K562 (cell line): ENCODE measurements at regions of chr17 and their contacts with region 1.

Region 1: DNA sequence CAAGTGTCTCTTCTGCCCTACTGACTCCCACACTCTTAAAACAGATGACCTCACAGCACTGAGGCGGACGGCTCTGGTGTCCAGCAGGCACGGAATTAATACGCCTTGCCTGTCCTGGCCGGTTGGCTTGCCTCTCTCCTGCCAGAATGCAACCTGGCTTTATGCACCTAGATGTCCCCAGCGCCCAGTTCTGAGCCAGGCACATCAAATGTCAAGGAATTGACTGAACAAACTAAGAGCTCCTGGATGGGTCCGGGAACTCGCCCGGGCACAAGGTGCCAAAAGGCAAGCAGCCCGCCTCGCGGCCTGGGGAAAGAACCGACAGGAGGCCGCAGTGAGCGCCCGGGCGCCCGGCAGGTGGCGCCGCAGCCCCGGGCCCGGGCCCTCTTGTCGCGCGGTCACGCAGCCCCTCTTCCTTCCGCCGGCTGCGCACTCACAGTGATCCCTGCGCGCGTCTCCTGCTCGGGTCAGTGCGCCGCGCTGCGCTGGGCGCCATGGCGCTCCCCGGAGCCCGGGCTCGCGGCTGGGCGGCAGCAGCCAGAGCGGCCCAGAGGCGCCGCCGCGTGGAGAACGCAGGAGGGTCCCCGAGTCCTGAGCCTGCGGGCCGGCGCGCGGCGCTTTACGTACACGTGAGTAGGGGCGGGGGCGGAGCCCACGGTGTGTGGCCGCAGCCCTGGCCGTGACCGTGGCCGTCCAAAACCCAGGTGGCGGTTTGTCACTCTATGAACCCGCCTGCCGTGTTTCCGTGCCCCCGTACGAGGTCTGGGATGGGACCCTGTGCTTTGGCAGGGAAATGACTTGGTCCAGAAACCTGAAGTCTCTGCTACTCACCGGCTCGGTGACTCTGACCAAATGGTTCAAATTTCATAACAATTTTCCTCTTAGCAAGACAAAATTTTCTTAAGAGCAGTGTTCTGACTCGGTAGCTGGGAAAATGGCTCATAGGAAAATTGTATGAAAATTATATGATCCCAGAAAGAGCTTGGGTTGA is at the start of gene RSAD1:
- DNase-seq: peak; percentile 89 to 93 (median 90)
- ATAC-seq: peak; percentile 93
- H3K4me3 ChIP-seq: peak within 1 kb of the TSS; percentile 80
- H3K27ac ChIP-seq: peak within 1 kb of the TSS; percentile 90
- H3K4me1 ChIP-seq: peaks cover 11 to 34% of the 10 kb centered on the region in 2 experiments; a peak in 4 of 5 replicates
- H3K27me3 ChIP-seq: peaks cover 4 to 9% of the 10 kb centered on the region in 2 experiments; a peak in 2 of 5 replicates
- CTCF ChIP-seq: peak; percentile 76 to 96 (median 82)
- EP300 ChIP-seq: peak; percentile 13; the same call in 1 of the 2 replicates
- POLR2A ChIP-seq: peak; percentile 70; the same call in 1 of the 2 replicates
- RAD21 ChIP-seq: peak; percentile 83 to 86
- polyA plus RNA-seq, gene RSAD1: 4.5 to 5.2 TPM

Region 2: DNA sequence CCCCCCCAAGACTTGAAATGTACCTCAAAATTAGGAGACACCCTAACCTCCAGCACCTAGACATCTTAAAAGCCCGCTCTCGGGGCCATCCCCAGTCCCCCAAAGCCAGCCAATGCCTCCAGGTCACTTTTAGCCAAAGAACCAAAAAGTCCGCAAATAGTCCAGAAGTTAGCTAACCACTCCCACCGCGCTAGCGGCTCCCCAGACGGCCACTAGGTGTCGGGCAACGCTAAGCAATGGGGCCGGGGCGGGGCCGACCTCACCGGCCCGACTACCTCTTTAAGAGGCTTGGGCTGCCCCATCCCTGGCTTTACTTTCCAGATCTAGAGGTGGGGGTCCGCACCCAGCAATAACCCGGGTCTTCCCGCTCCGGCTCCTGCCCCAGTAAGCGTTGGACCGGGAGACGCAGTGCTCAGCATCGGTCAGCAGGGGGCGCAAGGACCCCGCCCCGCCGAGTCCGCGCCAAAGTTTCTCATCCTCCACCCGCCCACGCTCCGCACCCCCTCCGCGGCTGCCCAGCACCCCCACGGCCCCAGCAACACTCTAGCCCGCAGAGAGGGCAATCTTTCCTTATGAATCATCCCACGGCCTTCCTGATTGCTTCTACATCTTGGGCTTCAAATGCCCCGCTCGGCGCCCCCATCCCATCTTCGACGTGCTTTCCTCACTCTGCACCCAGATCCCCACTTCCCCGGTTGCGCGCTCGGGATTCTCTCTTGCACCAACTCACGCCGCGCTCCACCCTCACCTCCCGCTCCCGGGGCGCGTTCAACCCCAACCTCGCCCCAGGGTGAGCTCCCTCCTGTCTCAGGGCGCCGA is 278.0 kb before region 1 on chr17:
- CTCF ChIA-PET with region 1: interaction called, 11 read pairs
- POLR2A ChIA-PET with region 1: no interaction called
- in situ Hi-C with region 1: no loop called
- intact Hi-C with region 1: no loop called
- DNase-seq: peak; percentile 82 to 88 (median 85)
- ATAC-seq: peak; percentile 94
- H3K4me3 ChIP-seq: peak overlapping the region; percentile 41
- H3K27ac ChIP-seq: no peak overlapping the region; the same call in 2 of the 3 replicates
- H3K4me1 ChIP-seq: peaks cover 11 to 28% of the 10 kb centered on the region in 2 experiments
- H3K27me3 ChIP-seq: peaks cover 6 to 33% of the 10 kb centered on the region in 2 experiments; a peak in 4 of 5 replicates
- CTCF ChIP-seq: peak; percentile 94 to 100 (median 97)
- EP300 ChIP-seq: no peak
- POLR2A ChIP-seq: no peak
- RAD21 ChIP-seq: peak; percentile 100

Region 3: GRCh38 chr17:50297407-50297865 is 181.2 kb before region 1 on chr17:
- CTCF ChIA-PET with region 1: no interaction called
- POLR2A ChIA-PET with region 1: interaction called, 3 read pairs
- in situ Hi-C with region 1: no loop called
- intact Hi-C with region 1: loop called (anchors 10 kb)
- DNase-seq: peak; percentile 80 to 86 (median 84)
- ATAC-seq: peak; percentile 99
- H3K4me3 ChIP-seq: no peak overlapping the region
- H3K27ac ChIP-seq: no peak overlapping the region
- H3K4me1 ChIP-seq: no peaks in the 10 kb centered on the region; a peak in 1 of 5 replicates
- H3K27me3 ChIP-seq: peaks cover 5 to 30% of the 10 kb centered on the region in 2 experiments; a peak in 4 of 5 replicates
- CTCF ChIP-seq: peak; percentile 94 to 96 (median 95)
- EP300 ChIP-seq: no peak
- POLR2A ChIP-seq: no peak
- RAD21 ChIP-seq: peak; percentile 99

Region 4: DNA sequence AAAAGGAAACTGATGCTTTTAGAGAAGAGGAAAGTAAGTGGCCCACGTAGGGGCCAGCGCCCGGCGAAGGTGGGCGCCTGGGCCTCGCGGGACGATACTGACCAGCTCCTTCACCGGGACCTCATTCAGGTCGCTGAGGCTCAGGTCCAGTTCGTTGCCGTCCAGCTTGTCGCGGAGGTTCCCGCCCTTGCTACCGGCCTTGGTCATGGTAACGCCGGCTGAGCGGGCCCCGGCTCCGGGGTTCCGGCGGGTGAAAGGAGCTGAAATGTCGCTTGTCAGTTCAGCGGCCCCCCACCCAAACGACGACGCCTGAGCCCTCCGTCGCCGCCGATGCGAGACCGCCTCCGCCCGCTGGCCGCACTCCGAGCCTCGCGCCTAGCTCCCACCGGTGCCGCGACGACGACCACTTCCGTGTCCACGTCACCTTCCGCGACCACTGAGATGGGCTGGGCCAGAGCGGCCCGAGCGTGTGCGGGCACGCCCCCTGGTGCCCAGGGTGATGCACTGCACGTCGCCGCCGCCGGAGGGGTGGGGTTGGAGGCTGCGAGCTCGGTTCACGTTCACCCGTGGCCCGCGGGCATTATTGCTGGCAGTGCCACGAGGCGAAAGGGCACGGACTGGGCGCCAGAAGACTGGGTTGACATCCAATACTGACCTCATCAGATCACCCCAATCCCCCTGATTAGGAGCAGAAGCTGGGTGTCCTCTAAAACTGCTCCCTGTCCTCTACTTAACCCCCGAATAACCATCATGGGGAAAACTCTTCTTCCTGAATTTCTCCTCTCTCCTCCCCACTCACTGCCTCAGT is 81.4 kb before region 1 on chr17 and contains the start of gene LRRC59:
- CTCF ChIA-PET with region 1: interaction called, 9 read pairs
- POLR2A ChIA-PET with region 1: no interaction called
- in situ Hi-C with region 1: no loop called
- intact Hi-C with region 1: loop called (anchors 2 kb)
- DNase-seq: peak; percentile 89 to 93 (median 90)
- ATAC-seq: peak; percentile 94
- H3K4me3 ChIP-seq: peak within 1 kb of the TSS; percentile 87
- H3K27ac ChIP-seq: peak within 1 kb of the TSS; percentile 93
- H3K4me1 ChIP-seq: peaks cover 21 to 29% of the 10 kb centered on the region in 2 experiments; a peak in 4 of 5 replicates
- H3K27me3 ChIP-seq: no peaks in the 10 kb centered on the region
- CTCF ChIP-seq: peak; percentile 92 to 97 (median 95)
- EP300 ChIP-seq: peak; percentile 16; the same call in 1 of the 2 replicates
- POLR2A ChIP-seq: peak; percentile 92
- RAD21 ChIP-seq: peak; percentile 42 to 48
- polyA plus RNA-seq, gene LRRC59: 27.8 to 38.7 TPM

Region 5: DNA sequence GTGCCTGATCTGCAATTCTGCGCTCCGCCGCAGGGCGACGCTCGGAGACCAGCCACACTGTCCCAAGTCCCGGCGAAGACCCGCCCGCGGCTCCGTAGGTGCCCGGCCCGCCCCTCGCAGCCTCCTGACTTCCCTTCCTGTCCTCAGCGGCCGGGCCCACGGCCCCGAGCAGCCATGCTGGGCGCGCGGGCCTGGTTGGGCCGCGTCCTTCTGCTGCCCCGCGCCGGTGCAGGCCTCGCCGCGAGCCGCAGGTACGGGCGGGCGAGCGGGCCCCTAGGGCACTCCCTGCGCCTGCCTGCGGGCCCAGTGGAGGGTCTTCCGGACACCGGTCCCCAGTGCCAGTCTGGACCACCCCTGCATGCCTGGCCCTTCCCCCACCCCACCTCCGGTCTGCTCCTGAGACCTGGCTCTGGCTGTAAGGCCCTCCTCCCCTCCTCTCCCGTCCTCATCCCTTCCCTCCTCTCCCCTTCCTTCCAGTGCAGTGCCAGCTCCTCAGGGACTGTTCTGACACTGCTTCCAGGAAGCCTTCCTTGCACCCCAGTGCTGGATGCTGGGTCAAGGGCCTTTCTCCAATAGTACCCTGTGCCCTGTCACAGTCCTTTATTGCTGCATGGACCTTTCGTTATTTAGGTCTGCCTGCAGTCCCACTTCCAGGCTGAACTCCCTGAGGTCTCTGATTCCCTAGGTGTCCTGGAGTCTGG is 68.5 kb after region 1 on chr17 and contains the start of gene SPATA20:
- CTCF ChIA-PET with region 1: interaction called, 7 read pairs
- POLR2A ChIA-PET with region 1: no interaction called
- in situ Hi-C with region 1: no loop called
- intact Hi-C with region 1: loop called (anchors 2 kb)
- DNase-seq: peak; percentile 84 to 90 (median 88)
- ATAC-seq: peak; percentile 84
- H3K4me3 ChIP-seq: peak within 1 kb of the TSS; percentile 33
- H3K27ac ChIP-seq: peak within 1 kb of the TSS; percentile 26; the same call in 1 of the 3 replicates
- H3K4me1 ChIP-seq: peaks cover 15 to 53% of the 10 kb centered on the region in 2 experiments; a peak in 4 of 5 replicates
- H3K27me3 ChIP-seq: 0 out of 5 replicates have a peak, but pooled peaks cover 0 to 6% of the 10 kb centered on the region in 2 experiments
- CTCF ChIP-seq: peak; percentile 95 to 97 (median 95)
- EP300 ChIP-seq: no peak
- POLR2A ChIP-seq: no peak
- RAD21 ChIP-seq: peak; percentile 93 to 96
- polyA plus RNA-seq, gene SPATA20: 0.08 to 0.13 TPM

Region 6: GRCh38 chr17:50681263-50682210 is 202.9 kb after region 1 on chr17:
- CTCF ChIA-PET with region 1: interaction called, 5 read pairs
- POLR2A ChIA-PET with region 1: no interaction called
- in situ Hi-C with region 1: no loop called
- intact Hi-C with region 1: loop called (anchors 5 kb)
- DNase-seq: peak; percentile 73 to 79 (median 76)
- ATAC-seq: peak; percentile 86
- H3K4me3 ChIP-seq: no peak overlapping the region
- H3K27ac ChIP-seq: no peak overlapping the region
- H3K4me1 ChIP-seq: peaks cover 4 to 11% of the 10 kb centered on the region in 2 experiments; a peak in 3 of 5 replicates
- H3K27me3 ChIP-seq: peaks cover 5 to 31% of the 10 kb centered on the region in 2 experiments; a peak in 4 of 5 replicates
- CTCF ChIP-seq: peak; percentile 86 to 98 (median 97)
- EP300 ChIP-seq: no peak
- POLR2A ChIP-seq: no peak
- RAD21 ChIP-seq: peak; percentile 90 to 96

Region 7: DNA sequence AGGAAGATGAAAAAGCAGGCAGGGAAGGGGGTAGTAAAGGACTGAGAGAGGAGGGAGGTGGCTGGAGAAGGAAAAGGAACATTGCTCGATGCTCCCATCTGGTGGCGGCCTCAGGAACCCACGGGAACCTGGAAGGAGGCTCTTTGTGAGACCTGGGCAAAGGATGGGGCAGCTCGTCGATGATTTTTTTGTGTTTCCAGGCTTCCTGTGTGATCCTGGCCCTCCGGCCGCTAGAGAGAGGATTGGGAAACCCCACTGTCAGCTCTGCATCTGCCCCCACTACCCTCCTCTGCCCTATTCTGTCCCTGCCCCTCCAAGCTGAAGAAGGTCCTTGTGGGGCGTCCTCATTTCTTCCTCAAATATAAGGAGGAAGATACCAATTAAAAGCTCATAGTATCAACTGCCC is 363.3 kb after region 1 on chr17:
- CTCF ChIA-PET with region 1: interaction called, 5 read pairs
- POLR2A ChIA-PET with region 1: no interaction called
- in situ Hi-C with region 1: no loop called
- intact Hi-C with region 1: loop called (anchors 5 kb)
- DNase-seq: peak; percentile 77 to 84 (median 83)
- ATAC-seq: peak; percentile 93
- H3K4me3 ChIP-seq: no peak overlapping the region
- H3K27ac ChIP-seq: no peak overlapping the region
- H3K4me1 ChIP-seq: peaks cover 0 to 13% of the 10 kb centered on the region in 2 experiments; a peak in 2 of 5 replicates
- H3K27me3 ChIP-seq: no peaks in the 10 kb centered on the region
- CTCF ChIP-seq: peak; percentile 84 to 90 (median 87)
- EP300 ChIP-seq: no peak
- POLR2A ChIP-seq: no peak
- RAD21 ChIP-seq: peak; percentile 85 to 94